ENCODE measurements at regions of chr3 and their contacts with region 1.

Region 1: GRCh38 chr3:98329392-98330124 is 24.1 kb upstream of the OR5K4 start:
- DNase-seq: peak in 4 of 5 donors; percentile 50 to 74 (median 54)
- H3K4me3 ChIP-seq: no peak overlapping the region
- H3K27ac ChIP-seq: no peak overlapping the region
- H3K4me1 ChIP-seq: no peaks in the 10 kb centered on the region
- H3K27me3 ChIP-seq: no peaks in the 10 kb centered on the region
- CTCF ChIP-seq: peak; percentile 59

Region 2: DNA sequence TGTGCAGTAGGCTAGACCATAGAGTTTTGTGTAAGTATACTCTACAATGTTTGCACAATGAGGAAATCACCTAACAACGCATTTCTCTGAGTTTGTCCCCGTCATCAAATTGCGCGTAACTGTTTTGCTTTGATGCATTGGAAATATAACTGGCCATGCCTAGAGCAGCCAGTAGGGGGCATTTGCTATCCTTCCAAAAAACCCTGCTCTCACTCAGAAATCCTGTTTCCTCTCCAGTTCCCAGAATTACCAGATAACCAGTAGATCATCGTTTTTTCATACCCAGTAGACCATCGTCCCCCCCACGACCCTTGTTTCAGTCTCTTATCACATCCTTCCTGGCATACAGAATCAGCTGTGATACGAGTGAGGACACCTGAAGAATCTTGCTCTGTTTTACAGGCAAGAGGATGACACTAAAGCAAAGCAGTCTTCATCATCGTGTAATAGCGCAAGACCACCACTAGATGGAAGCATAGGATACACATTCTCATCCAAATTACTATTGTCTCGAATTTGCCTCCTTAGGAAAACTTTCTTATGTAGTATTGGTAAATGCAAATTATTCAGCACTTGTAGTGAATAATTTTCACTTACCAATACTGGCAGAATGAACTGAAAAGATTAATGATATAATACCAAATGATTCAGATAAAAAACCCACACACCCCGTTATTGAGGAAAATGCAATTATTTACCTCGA is 290.1 kb before region 1 on chr3:
- intact Hi-C with region 1: loop called (anchors 10 kb)
- DNase-seq: peak in 4 of 5 donors; percentile 71 to 93 (median 82)
- H3K4me3 ChIP-seq: peak overlapping the region; percentile 52 to 77 (median 76)
- H3K27ac ChIP-seq: no peak overlapping the region
- H3K4me1 ChIP-seq: peaks cover 0 to 2% (median 0%) of the 10 kb centered on the region in 3 donors
- H3K27me3 ChIP-seq: no peaks in the 10 kb centered on the region
- CTCF ChIP-seq: peak; percentile 89